ENCODE measurements at regions of chr16 and their contacts with region 1.

Region 1: GRCh38 chr16:30922960-30923535 is 324 bp upstream of the FBXL19 start:
- DNase-seq: peak; percentile 86
- ATAC-seq: peak; percentile 68
- H3K4me3 Mint-ChIP-seq: peak overlapping the region; percentile 100
- H3K27ac Mint-ChIP-seq: peak overlapping the region; percentile 100
- H3K4me1 Mint-ChIP-seq: peaks cover 20% of the 10 kb centered on the region
- H3K27me3 Mint-ChIP-seq: no peaks in the 10 kb centered on the region
- CTCF ChIP-seq: no peak

Region 2: GRCh38 chr16:29815793-29816693 is 1107.0 kb before region 1 on chr16 and contains the start of gene PAGR1:
- CTCF ChIA-PET with region 1: no interaction called
- POLR2A ChIA-PET with region 1: no interaction called
- intact Hi-C with region 1: loop called (anchors 2 kb)
- DNase-seq: peak; percentile 97
- ATAC-seq: peak; percentile 74
- H3K4me3 Mint-ChIP-seq: peak within 1 kb of the TSS; percentile 99
- H3K27ac Mint-ChIP-seq: peak within 1 kb of the TSS; percentile 99
- H3K4me1 Mint-ChIP-seq: peaks cover 71% of the 10 kb centered on the region
- H3K27me3 Mint-ChIP-seq: no peaks in the 10 kb centered on the region
- CTCF ChIP-seq: peak; percentile 89
- total RNA-seq, gene PAGR1: 18.6 and 20.3 TPM in 2 replicates

Region 3: GRCh38 chr16:30557957-30558788 is 364.9 kb before region 1 on chr16 and contains the start of gene ZNF764:
- CTCF ChIA-PET with region 1: no interaction called
- POLR2A ChIA-PET with region 1: interaction called, 4 read pairs
- intact Hi-C with region 1: loop called (anchors 10 kb)
- DNase-seq: peak; percentile 91
- ATAC-seq: peak; percentile 93
- H3K4me3 Mint-ChIP-seq: peak within 1 kb of the TSS; percentile 83
- H3K27ac Mint-ChIP-seq: peak within 1 kb of the TSS; percentile 84
- H3K4me1 Mint-ChIP-seq: peaks cover 43% of the 10 kb centered on the region
- H3K27me3 Mint-ChIP-seq: no peaks in the 10 kb centered on the region
- CTCF ChIP-seq: no peak
- total RNA-seq, gene ZNF764: 16.1 and 19.2 TPM in 2 replicates

Region 4: GRCh38 chr16:30698139-30698815 is 224.8 kb before region 1 on chr16:
- CTCF ChIA-PET with region 1: no interaction called
- POLR2A ChIA-PET with region 1: no interaction called
- intact Hi-C with region 1: loop called (anchors 1 kb)
- DNase-seq: peak; percentile 96
- ATAC-seq: peak; percentile 75
- H3K4me3 Mint-ChIP-seq: peak overlapping the region; percentile 97
- H3K27ac Mint-ChIP-seq: peak overlapping the region; percentile 100
- H3K4me1 Mint-ChIP-seq: peaks cover 30% of the 10 kb centered on the region
- H3K27me3 Mint-ChIP-seq: no peaks in the 10 kb centered on the region
- CTCF ChIP-seq: no peak

Region 5: GRCh38 chr16:30844671-30845449 is 78.2 kb before region 1 on chr16:
- CTCF ChIA-PET with region 1: interaction called, 41 read pairs
- POLR2A ChIA-PET with region 1: interaction called, 6 read pairs
- intact Hi-C with region 1: loop called (anchors 1 kb)
- DNase-seq: peak; percentile 31
- ATAC-seq: peak; percentile 93
- H3K4me3 Mint-ChIP-seq: peak overlapping the region; percentile 65
- H3K27ac Mint-ChIP-seq: peak overlapping the region; percentile 77
- H3K4me1 Mint-ChIP-seq: peaks cover 11% of the 10 kb centered on the region
- H3K27me3 Mint-ChIP-seq: no peaks in the 10 kb centered on the region
- CTCF ChIP-seq: peak; percentile 71

Region 6: DNA sequence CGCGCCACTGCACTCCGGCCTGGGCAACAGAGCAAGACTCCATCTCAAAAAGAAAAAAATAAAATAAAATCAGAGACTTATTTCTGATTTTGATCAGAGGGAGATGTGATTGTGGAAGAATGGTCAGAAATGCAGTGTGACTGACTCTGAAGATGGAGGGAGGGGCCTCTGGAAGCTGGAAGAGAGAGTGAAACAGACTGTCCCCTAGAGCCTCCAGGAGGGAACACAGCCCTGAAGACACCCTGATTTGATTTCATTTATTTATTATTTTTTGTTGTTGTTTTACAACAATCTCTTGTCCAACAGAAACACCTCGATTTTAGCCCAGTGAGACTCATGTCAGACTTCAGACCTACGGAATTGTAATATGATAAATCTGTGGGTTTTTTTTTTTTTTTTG is 55.3 kb before region 1 on chr16:
- CTCF ChIA-PET with region 1: no interaction called
- POLR2A ChIA-PET with region 1: no interaction called
- intact Hi-C with region 1: no loop called
- DNase-seq: no peak
- ATAC-seq: no peak
- H3K4me3 Mint-ChIP-seq: no peak overlapping the region
- H3K27ac Mint-ChIP-seq: no peak overlapping the region
- H3K4me1 Mint-ChIP-seq: peaks cover 11% of the 10 kb centered on the region
- H3K27me3 Mint-ChIP-seq: no peaks in the 10 kb centered on the region
- CTCF ChIP-seq: no peak

Region 7: GRCh38 chr16:30941600-30942425 is 18.8 kb after region 1 on chr16:
- CTCF ChIA-PET with region 1: interaction called, 4 read pairs
- POLR2A ChIA-PET with region 1: no interaction called
- intact Hi-C with region 1: loop called (anchors 1 kb)
- DNase-seq: peak; percentile 62
- ATAC-seq: peak; percentile 99
- H3K4me3 Mint-ChIP-seq: peak overlapping the region; percentile 52
- H3K27ac Mint-ChIP-seq: peak overlapping the region; percentile 63
- H3K4me1 Mint-ChIP-seq: peaks cover 22% of the 10 kb centered on the region
- H3K27me3 Mint-ChIP-seq: no peaks in the 10 kb centered on the region
- CTCF ChIP-seq: peak; percentile 62

Region 8: DNA sequence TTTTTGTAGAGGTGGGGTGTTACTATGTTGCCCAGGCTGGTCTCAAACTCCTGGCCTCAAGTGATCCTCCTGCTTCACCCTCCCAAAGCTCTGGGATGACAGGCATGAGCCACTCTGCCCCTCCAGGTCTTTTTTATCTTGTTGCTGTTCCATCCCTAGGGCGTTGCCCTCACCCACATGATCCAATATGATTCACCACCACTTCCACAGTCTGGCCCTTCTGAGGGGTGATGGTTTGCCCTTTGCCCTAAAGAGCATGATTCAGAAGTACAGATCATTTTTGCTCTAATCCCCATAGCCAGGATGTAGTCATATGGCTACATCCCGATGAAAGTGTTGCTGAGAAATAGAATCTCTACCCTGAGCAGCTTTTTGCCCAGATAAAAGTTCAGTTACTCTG is 129.1 kb after region 1 on chr16:
- CTCF ChIA-PET with region 1: no interaction called
- POLR2A ChIA-PET with region 1: no interaction called
- intact Hi-C with region 1: no loop called
- DNase-seq: no peak
- ATAC-seq: no peak
- H3K4me3 Mint-ChIP-seq: no peak overlapping the region
- H3K27ac Mint-ChIP-seq: no peak overlapping the region
- H3K4me1 Mint-ChIP-seq: no peaks in the 10 kb centered on the region
- H3K27me3 Mint-ChIP-seq: no peaks in the 10 kb centered on the region
- CTCF ChIP-seq: no peak

Region 9: GRCh38 chr16:31073968-31074813 is 151.1 kb after region 1 on chr16 and contains the starts of genes ZNF646 and ZNF668:
- CTCF ChIA-PET with region 1: no interaction called
- POLR2A ChIA-PET with region 1: interaction called, 3 read pairs
- intact Hi-C with region 1: loop called (anchors 1 kb)
- DNase-seq: peak; percentile 86
- ATAC-seq: peak; percentile 83
- H3K4me3 Mint-ChIP-seq: peak within 1 kb of the TSS; percentile 96
- H3K27ac Mint-ChIP-seq: peak within 1 kb of the TSS; percentile 91
- H3K4me1 Mint-ChIP-seq: peaks cover 34% of the 10 kb centered on the region
- H3K27me3 Mint-ChIP-seq: no peaks in the 10 kb centered on the region
- CTCF ChIP-seq: no peak
- total RNA-seq, gene ZNF646: 32.4 and 32.5 TPM in 2 replicates
- total RNA-seq, gene ZNF668: 8.3 and 10.1 TPM in 2 replicates